ENCODE measurements at regions of chr19 and their contacts with region 1.

Region 1: DNA sequence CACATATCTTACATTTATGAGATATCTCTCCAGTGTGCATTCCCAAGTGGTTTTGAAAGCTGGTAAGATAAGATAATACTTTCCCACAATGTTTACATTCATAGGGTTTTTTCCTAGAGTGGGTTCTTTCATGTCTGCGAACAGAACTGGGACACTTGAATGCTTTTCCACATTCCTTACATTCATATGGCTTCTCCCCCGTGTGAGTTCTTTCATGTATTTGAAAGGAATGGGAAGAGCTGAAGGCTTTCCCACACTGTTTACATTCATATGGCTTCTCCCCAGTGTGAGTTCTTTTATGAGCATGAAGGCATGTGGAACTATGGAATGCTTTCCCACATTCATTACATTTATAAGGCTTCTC is 19.7 kb downstream of the ZNF433 start:
- DNase-seq: no peak

Region 2: DNA sequence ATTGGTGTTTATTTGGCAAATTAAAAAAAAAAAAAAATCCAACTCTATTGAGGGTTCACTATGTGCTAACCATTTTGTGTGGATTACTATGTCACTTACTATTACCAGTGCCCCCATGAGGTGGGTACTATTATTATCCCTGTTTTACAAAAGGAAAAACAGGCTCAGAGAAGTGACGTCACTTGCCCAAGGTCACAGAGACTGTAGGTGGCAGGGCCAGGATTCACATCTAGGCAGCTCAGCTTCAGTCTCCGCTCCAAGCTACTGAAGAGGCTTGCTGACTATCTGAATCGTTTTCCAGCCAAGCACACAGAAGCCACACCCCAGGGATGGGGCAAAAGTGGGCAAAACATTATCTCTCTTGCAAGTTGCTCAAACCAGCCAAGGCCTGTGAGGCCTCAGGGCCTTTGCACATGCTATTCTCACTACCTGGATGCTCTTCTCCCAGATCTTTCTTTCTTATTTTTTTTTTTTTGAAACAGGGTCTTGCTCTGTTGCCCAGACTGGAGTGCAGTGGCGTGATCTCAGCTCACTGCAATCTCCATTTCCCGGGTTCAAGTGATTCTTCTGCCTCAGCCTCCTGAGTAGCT is 781.2 kb before region 1 on chr19:
- intact Hi-C with region 1: loop called in 1 of 2 experiments (anchors 5 kb)
- DNase-seq: no peak

Measured in posterior vena cava (tissue), 2 donors.